Activated T-helper 1 cell treated with anti-CD3 and anti-CD28 coated beads, Interleukin-12 subunit alpha, Interleukin-12 subunit beta, Interleukin-2, Interleukin-4 antibody, amounts not matched to agents 30 ng/mL and 10 ng/mL and 1 ng/mL, durations not matched to agents 14 hours and 24 hours and 36 hours (primary cell): ENCODE measurements at regions of chr4 and their contacts with region 1.

Region 1: DNA sequence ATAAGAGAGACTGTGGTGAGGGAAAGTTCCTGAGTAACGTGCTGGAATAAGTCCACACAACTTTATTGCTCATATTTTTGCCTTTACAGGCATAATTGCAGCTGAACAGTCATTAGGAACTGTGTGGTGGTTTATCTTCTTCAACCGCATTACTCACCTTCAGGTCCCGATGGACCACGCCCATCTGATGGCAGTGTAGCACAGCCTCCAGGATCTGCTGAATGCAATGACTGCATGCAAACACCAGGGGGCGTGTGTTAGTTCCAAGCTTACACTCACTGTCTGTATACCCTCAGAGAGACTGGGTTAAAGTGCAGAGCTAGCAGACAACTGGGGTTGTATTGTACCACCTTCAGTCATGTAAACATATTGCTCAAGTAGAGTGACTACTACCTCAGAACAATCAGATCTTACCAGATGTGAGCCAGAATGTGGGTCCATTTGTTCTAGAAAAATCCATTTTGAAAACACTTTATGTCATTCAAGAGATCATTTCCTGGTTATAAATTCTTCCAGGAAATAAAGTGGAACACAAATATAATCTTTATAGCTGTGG is 214.0 kb downstream of the CAMK2D start:
- DNase-seq: peak; percentile 87
- H3K4me3 Mint-ChIP-seq: no peak overlapping the region
- H3K27ac Mint-ChIP-seq: peak overlapping the region; percentile 49
- H3K4me1 Mint-ChIP-seq: peaks cover 30% of the 10 kb centered on the region
- H3K27me3 Mint-ChIP-seq: no peaks in the 10 kb centered on the region

Region 2: GRCh38 chr4:113355550-113356371 is 191.8 kb before region 1 on chr4:
- intact Hi-C with region 1: loop called (anchors 2 kb)
- DNase-seq: peak; percentile 71
- H3K4me3 Mint-ChIP-seq: peak overlapping the region; percentile 30
- H3K27ac Mint-ChIP-seq: peak overlapping the region; percentile 79
- H3K4me1 Mint-ChIP-seq: peaks cover 37% of the 10 kb centered on the region
- H3K27me3 Mint-ChIP-seq: peaks cover 25% of the 10 kb centered on the region

Region 3: GRCh38 chr4:113474017-113474416 is 73.5 kb before region 1 on chr4:
- intact Hi-C with region 1: loop called (anchors 1 kb)
- DNase-seq: no peak
- H3K4me3 Mint-ChIP-seq: no peak overlapping the region
- H3K27ac Mint-ChIP-seq: peak overlapping the region; percentile 82
- H3K4me1 Mint-ChIP-seq: peaks cover 39% of the 10 kb centered on the region
- H3K27me3 Mint-ChIP-seq: no peaks in the 10 kb centered on the region

Region 4: DNA sequence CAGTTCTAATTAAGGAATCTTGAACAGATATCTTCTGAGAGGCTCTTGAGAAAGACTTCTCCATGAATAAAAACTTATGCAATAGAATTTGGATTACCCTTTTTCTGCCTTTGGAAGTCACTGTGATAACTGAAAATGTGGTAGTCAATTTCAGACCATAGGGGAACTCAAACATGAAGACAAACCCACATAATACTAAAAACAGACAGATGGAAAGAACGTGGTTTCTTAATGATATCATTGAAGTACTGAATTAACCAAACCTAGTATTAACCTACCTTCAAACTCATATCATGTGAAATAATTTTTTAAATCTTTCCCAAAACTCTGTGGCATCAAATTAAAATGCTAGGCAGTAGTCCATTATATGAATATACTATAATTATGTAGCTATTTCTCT is 60.4 kb after region 1 on chr4:
- intact Hi-C with region 1: loop called (anchors 1 kb)
- DNase-seq: no peak
- H3K4me3 Mint-ChIP-seq: no peak overlapping the region
- H3K27ac Mint-ChIP-seq: peak overlapping the region; percentile 36
- H3K4me1 Mint-ChIP-seq: peaks cover 34% of the 10 kb centered on the region
- H3K27me3 Mint-ChIP-seq: no peaks in the 10 kb centered on the region

Region 5: DNA sequence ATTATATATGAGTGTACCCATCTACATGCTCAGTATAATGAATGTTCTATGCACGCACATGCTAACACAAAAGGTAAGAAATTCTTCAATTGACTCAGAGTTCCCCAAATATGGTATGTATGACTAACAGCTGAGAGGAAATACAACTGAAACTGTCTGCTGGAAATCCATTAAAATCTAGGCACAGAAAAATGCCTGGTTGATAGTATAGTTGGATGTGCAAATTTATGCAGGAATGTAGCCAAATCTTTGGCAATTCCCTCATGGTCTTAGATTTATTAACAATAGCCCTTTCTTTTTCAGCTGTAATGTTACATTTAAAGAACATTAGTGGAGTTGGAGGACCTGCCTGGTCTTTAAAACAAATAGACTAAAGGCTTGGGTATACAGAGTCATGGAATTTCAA is 208.4 kb after region 1 on chr4:
- intact Hi-C with region 1: loop called (anchors 1 kb)
- DNase-seq: no peak
- H3K4me3 Mint-ChIP-seq: peak overlapping the region; percentile 100
- H3K27ac Mint-ChIP-seq: peak overlapping the region; percentile 73
- H3K4me1 Mint-ChIP-seq: peaks cover 61% of the 10 kb centered on the region
- H3K27me3 Mint-ChIP-seq: no peaks in the 10 kb centered on the region

Region 6: GRCh38 chr4:113869743-113870375 is 322.3 kb after region 1 on chr4:
- intact Hi-C with region 1: loop called (anchors 2 kb)
- DNase-seq: peak; percentile 2
- H3K4me3 Mint-ChIP-seq: peak overlapping the region; percentile 53
- H3K27ac Mint-ChIP-seq: peak overlapping the region; percentile 88
- H3K4me1 Mint-ChIP-seq: peaks cover 16% of the 10 kb centered on the region
- H3K27me3 Mint-ChIP-seq: no peaks in the 10 kb centered on the region

Region 7: DNA sequence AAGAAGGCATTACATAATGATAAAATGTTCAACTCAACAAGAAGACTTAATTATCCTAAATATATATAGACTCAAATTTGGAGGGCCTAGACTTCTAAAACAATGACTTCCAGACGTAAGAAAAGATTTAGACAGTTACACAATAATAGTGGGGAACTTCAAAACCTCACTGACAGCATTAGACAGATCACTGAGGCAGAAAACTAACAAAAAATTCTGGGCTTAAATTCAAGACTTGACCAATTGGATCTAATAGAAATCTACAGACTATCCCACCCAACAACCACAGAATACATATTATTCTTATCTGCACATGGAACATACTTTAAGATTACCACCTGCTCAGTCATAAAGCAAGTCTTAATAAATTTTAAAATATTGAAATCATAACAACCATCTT is 525.2 kb after region 1 on chr4:
- intact Hi-C with region 1: loop called (anchors 2 kb)
- DNase-seq: no peak
- H3K4me3 Mint-ChIP-seq: no peak overlapping the region
- H3K27ac Mint-ChIP-seq: no peak overlapping the region
- H3K4me1 Mint-ChIP-seq: no peaks in the 10 kb centered on the region
- H3K27me3 Mint-ChIP-seq: peaks cover 30% of the 10 kb centered on the region